ENCODE measurements at regions of chr3 and their contacts with region 1.

Region 1: DNA sequence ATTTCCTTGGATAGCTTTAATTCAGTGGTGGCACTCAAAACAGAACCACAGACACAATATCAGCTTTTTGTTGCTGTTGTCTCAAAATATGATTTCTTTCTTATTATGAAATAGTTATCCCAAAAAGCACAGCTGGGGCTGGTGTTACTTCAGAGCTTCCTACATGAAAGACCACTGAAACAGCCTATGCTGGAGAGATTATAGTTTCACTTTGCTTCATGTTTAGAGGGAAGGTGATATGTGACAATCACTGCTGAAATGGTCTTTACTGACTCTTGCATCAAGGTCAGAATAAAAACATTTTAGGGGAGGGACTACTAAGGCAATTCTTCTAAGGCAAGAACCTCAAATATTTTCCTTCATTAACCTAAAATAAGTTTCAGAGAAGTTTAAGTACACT is 190.7 kb downstream of the TNIK start:
- DNase-seq: no peak
- CTCF ChIP-seq: no peak

Region 2: GRCh38 chr3:171284308-171285075 is 14.9 kb after region 1 on chr3:
- CTCF ChIA-PET with region 1: interaction called, 32 read pairs
- POLR2A ChIA-PET with region 1: interaction called, 3 read pairs
- DNase-seq: peak; percentile 18
- CTCF ChIP-seq: no peak